Left ventricle myocardium inferior (tissue), 1 donor: ENCODE measurements at regions of chr10 and their contacts with region 1.

Region 1: GRCh38 chr10:115706026-115706781 is 566.8 kb downstream of the GFRA1 start:
- DNase-seq: no peak
- H3K4me3 ChIP-seq: no peak overlapping the region
- H3K27ac ChIP-seq: no peak overlapping the region
- H3K4me1 ChIP-seq: no peaks in the 10 kb centered on the region
- H3K27me3 ChIP-seq: no peaks in the 10 kb centered on the region
- CTCF ChIP-seq: peak; percentile 52

Region 2: DNA sequence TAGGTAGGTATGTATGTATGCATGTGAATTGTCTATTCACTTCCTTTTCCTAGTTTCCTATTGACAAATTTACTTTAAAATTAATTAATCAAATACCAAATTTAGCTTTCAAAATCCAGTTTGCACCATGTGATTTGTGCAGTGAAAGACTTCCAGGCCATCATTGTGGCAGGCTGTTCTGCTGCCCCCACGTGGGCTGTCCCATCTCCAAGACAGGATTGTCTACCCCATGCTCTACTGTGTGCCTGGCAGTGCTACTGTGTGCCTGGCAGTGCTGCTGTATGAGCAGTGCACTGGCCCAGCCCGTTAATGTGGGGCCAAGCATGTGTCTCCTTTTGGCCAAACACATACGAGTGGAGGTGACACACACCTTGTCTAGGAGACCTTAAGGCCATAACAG is 192.0 kb after region 1 on chr10:
- intact Hi-C with region 1: no loop called
- DNase-seq: no peak
- H3K4me3 ChIP-seq: no peak overlapping the region
- H3K27ac ChIP-seq: no peak overlapping the region
- H3K4me1 ChIP-seq: no peaks in the 10 kb centered on the region
- H3K27me3 ChIP-seq: no peaks in the 10 kb centered on the region
- CTCF ChIP-seq: no peak

Region 3: DNA sequence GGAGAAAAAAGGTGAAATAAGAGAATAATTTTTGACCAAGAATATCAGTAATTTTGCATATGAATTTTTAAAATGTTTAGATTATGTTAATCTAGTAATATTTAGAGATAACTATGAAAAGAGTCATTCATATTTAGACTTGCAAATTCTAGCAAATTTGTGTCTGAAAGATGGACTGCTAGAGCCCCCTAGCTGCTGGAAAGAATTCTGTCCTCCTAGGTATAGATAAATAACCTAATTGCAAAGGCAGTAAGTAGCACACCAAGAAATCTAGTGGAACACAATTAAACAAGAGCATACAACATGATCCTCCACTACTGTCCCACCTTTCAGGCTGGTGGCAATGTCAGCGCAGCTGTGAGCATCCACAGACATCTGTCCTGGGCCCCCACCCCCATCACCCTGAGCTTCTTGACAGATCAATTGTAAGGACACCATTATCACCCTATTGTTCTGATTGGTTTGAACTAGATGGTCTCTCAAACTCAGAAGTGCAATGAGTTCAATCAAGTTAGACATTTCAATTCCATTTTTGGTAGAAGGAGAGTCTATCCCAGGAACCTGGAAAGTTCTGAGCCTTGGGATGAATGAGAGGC is 581.8 kb after region 1 on chr10:
- intact Hi-C with region 1: loop called (anchors 5 kb)
- DNase-seq: no peak
- H3K4me3 ChIP-seq: no peak overlapping the region
- H3K27ac ChIP-seq: no peak overlapping the region
- H3K4me1 ChIP-seq: no peaks in the 10 kb centered on the region
- H3K27me3 ChIP-seq: peaks cover 40% of the 10 kb centered on the region
- CTCF ChIP-seq: peak; percentile 79

Region 4: DNA sequence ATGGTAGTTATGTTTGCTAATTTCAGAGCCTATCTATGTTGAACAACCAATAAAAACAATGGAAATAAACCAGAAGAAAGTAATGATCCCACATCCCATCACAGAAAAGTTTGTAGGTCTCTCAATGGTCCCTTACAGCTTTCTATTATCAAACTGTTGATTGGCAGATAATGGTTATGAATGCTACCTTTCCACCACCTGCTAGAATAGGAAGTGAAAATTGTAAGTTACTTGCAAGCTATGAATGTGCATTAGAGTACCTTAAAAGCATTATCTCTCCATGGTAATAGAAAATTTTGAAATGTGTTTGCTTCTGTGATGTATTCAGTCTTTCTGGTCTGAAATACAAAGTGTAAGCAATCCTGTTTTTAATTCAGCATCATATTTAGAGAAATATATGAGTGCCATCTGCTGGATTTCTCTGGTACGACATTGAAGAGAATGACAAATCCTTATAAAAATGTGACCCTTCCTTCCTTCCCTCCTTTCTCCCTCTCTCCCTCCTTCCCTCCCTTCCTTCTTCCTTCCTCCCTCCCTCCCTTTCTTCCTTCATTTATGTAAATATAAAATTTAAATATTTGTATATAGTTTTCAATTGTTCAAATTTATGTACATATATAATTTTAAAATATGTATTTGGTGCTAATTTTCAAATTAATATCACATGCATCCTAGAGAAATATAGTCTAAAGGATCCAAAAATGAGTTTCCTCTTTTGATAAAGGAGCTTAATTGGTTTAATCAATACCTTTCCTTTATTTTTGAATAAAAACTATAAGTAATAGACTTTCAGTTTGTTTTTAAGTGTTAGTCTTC is 680.0 kb after region 1 on chr10:
- intact Hi-C with region 1: loop called (anchors 5 kb)
- DNase-seq: no peak
- H3K4me3 ChIP-seq: no peak overlapping the region
- H3K27ac ChIP-seq: no peak overlapping the region
- H3K4me1 ChIP-seq: no peaks in the 10 kb centered on the region
- H3K27me3 ChIP-seq: peaks cover 9% of the 10 kb centered on the region
- CTCF ChIP-seq: peak; percentile 72